ENCODE measurements at regions of chr22 and their contacts with region 1.

Region 1: DNA sequence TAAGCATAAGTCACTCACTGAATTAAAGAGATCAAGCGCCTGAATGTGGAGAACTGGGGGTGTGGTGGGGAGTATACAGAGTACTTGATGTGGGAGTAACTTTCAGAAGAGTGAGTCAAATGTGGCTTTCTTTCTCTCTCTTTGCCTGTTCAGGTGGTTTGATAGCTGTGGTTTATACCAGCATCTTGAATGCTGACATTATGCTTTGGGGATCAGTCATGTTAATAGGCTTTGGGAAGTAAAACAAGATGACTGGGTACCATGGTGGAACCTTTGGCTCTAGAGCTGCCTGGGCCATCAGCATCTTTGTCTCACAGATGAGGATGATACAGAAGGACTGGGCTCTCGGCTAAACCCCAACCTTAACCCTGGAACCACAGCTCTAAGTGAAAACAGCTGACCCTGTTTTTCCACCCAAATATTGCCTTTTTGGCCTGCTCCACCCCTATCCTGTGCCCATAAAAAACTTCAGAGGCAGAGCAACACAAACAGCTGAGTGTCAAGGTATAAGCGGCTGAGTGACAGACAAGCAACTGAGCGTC is 58.2 kb upstream of the GNAZ start:
- DNase-seq: peak; percentile 72
- ATAC-seq: peak; percentile 93
- H3K4me3 Mint-ChIP-seq: no peak overlapping the region
- H3K27ac Mint-ChIP-seq: peak overlapping the region; percentile 45
- H3K4me1 Mint-ChIP-seq: peaks cover 30% of the 10 kb centered on the region
- H3K27me3 Mint-ChIP-seq: peaks cover 51% of the 10 kb centered on the region

Region 2: GRCh38 chr22:22591348-22592299 is 420.5 kb before region 1 on chr22:
- CTCF ChIA-PET with region 1: no interaction called
- POLR2A ChIA-PET with region 1: no interaction called
- intact Hi-C with region 1: no loop called
- DNase-seq: no peak
- ATAC-seq: no peak
- H3K4me3 Mint-ChIP-seq: no peak overlapping the region
- H3K27ac Mint-ChIP-seq: no peak overlapping the region
- H3K4me1 Mint-ChIP-seq: peaks cover 2% of the 10 kb centered on the region
- H3K27me3 Mint-ChIP-seq: peaks cover 5% of the 10 kb centered on the region

Region 3: DNA sequence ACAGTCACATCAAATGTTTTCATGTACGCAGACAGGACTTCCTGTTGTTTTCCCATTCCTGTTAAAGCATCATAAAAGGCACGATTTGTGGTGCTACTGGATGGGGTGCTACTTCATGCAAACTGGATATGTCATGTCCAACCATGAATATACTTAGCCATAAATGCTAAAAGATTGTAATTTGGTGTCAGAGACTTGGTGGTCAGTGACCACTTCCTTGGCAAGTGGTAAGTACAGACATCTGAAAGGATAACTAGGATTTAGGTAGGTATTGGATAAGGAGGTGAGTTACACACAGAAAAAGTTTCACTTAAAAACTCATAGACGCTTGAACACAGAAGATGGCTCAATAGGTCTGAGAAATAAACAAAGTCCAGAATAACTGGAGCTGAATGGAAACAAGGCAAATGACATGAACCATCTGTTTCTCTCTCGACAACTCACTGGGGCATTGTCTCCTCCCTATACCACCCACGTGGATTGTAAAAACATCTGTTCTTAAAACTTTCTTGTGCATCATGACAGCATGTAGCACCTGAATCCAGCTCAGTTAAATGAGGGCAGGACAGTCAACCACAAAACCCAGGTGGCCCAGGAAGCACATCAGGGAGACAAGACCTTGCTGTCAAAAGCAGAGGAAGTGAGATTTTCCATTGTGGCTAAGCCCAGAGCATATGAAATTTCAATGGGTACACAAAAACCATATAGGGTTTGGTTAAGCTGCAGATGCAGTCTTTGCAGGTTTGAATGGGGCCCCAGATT is 146.7 kb before region 1 on chr22:
- CTCF ChIA-PET with region 1: no interaction called
- POLR2A ChIA-PET with region 1: no interaction called
- intact Hi-C with region 1: loop called (anchors 1 to 10 kb)
- DNase-seq: peak; percentile 66
- ATAC-seq: peak; percentile 80
- H3K4me3 Mint-ChIP-seq: no peak overlapping the region
- H3K27ac Mint-ChIP-seq: no peak overlapping the region
- H3K4me1 Mint-ChIP-seq: peaks cover 37% of the 10 kb centered on the region
- H3K27me3 Mint-ChIP-seq: no peaks in the 10 kb centered on the region

Region 4: GRCh38 chr22:22995166-22995565 is 17.0 kb before region 1 on chr22:
- CTCF ChIA-PET with region 1: no interaction called
- POLR2A ChIA-PET with region 1: no interaction called
- intact Hi-C with region 1: no loop called
- DNase-seq: no peak
- ATAC-seq: no peak
- H3K4me3 Mint-ChIP-seq: no peak overlapping the region
- H3K27ac Mint-ChIP-seq: no peak overlapping the region
- H3K4me1 Mint-ChIP-seq: no peaks in the 10 kb centered on the region
- H3K27me3 Mint-ChIP-seq: peaks cover 39% of the 10 kb centered on the region

Region 5: GRCh38 chr22:23036684-23037428 is 24.7 kb after region 1 on chr22:
- CTCF ChIA-PET with region 1: interaction called, 4 read pairs
- POLR2A ChIA-PET with region 1: interaction called, 5 read pairs
- intact Hi-C with region 1: loop called in 1 of 2 experiments (anchors 1 kb)
- DNase-seq: no peak
- ATAC-seq: peak; percentile 67
- H3K4me3 Mint-ChIP-seq: no peak overlapping the region
- H3K27ac Mint-ChIP-seq: peak overlapping the region; percentile 61
- H3K4me1 Mint-ChIP-seq: peaks cover 13% of the 10 kb centered on the region
- H3K27me3 Mint-ChIP-seq: peaks cover 6% of the 10 kb centered on the region

Region 6: DNA sequence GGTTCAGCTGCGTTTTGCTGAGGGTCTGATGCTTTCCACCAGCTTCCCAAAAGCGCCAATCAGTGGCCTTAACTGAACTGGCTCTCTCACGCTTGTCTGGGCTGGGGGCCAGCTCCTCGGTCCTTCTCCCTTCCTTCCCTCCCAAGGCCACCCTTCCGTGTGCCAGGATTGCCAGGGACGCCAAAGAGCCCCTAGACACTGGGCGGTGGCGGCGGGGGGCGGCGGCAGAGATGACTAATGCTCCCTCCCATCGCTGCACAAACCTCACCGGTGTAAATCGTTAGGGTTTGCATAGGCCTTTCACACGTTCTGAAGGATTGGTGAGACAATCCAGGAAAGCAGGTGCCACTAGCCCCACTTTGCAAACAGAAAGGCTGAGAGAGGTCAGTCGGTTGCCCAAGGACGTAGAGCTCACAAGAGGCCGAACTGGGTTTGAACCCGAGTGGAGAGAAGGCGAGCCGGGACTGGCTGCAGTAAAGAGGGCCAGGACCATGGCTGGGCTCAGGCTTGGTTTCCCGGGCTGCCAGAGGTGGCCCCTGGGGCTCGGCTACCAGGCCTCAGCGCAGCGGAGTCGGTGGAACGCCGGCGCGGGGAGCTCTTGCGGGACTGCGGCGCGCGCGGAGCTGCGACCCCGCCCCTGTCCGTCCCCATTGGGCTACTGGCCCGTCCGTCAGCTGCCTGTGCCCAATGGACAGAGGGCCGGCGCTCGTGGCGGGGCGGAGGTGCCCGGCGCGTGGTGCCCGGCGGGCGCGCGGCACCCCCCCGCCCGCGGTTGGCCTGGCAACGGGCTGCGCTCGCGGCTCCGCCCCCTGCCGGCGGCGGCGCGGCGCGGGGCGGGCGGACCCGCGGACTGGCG is 57.6 kb after region 1 on chr22:
- CTCF ChIA-PET with region 1: no interaction called
- POLR2A ChIA-PET with region 1: no interaction called
- intact Hi-C with region 1: loop called in 1 of 2 experiments (anchors 1 kb)
- DNase-seq: peak; percentile 91
- ATAC-seq: peak; percentile 99
- H3K4me3 Mint-ChIP-seq: peak overlapping the region; percentile 65
- H3K27ac Mint-ChIP-seq: peak overlapping the region; percentile 42
- H3K4me1 Mint-ChIP-seq: peaks cover 8% of the 10 kb centered on the region
- H3K27me3 Mint-ChIP-seq: peaks cover 14% of the 10 kb centered on the region

Measured in activated CD4-positive, alpha-beta T cell treated with anti-CD3 and anti-CD28 coated beads for 36 hours (primary cell).